ENCODE measurements at regions of chr12 and their contacts with region 1.

Region 1: DNA sequence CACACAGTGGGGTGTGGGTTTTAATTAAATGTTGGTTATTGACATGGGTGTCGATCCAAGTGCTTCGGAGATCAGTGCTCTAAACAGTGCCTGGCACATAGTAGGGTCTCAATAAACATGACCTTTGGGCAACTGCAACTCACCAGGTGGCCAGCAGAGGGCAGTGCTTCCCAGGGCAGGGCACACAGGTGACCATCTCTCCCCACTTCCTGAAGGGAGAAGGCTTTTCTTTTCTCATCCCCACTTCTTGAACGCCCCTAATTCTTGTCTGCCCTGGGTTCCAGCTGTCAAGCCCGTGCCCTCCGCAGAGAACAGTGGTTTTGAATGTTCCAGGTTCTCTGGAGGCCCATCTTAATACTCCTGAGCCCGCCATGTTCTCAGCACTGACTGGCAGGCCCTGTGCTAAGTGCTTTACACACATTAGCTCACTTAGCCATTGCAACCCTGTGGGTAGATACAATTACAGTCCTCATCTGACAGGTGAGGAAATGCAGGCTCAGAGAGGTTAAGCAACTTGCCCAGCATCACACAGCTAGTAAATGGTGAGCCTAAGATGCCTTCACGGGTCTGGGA is 16.3 kb downstream of the RAPGEF3 start:
- DNase-seq: peak; percentile 64
- H3K4me3 Mint-ChIP-seq: no peak overlapping the region
- H3K27ac Mint-ChIP-seq: no peak overlapping the region
- H3K4me1 Mint-ChIP-seq: peaks cover 9% of the 10 kb centered on the region
- H3K27me3 Mint-ChIP-seq: peaks cover 17% of the 10 kb centered on the region
- CTCF ChIP-seq: peak; percentile 99

Region 2: DNA sequence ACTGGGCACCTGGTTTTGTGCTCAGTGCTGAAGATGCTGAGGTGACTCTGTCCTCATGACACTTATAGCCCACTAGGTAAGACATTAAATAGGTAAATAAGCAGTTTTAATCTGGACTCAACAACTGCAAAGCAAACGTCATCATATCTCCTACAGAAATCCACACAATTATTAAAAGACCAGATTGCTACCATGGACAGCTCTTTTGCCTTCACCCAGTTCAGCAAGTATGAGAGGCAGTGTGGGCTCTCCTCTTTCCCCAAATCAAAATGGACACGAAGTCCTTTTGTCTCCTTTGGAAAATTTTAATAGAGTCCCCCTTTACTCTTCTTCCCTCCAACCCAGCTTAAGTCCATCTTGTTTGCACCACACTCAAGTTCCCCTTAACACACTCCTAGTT is 207.6 kb before region 1 on chr12:
- CTCF ChIA-PET with region 1: no interaction called
- POLR2A ChIA-PET with region 1: no interaction called
- intact Hi-C with region 1: no loop called
- DNase-seq: peak; percentile 37
- H3K4me3 Mint-ChIP-seq: no peak overlapping the region
- H3K27ac Mint-ChIP-seq: no peak overlapping the region
- H3K4me1 Mint-ChIP-seq: no peaks in the 10 kb centered on the region
- H3K27me3 Mint-ChIP-seq: peaks cover 85% of the 10 kb centered on the region
- CTCF ChIP-seq: no peak

Region 3: GRCh38 chr12:47715393-47715876 is 26.9 kb before region 1 on chr12:
- CTCF ChIA-PET with region 1: interaction called, 69 read pairs
- POLR2A ChIA-PET with region 1: no interaction called
- intact Hi-C with region 1: loop called (anchors 1 kb)
- DNase-seq: peak; percentile 97
- H3K4me3 Mint-ChIP-seq: peak overlapping the region; percentile 63
- H3K27ac Mint-ChIP-seq: no peak overlapping the region
- H3K4me1 Mint-ChIP-seq: peaks cover 15% of the 10 kb centered on the region
- H3K27me3 Mint-ChIP-seq: no peaks in the 10 kb centered on the region
- CTCF ChIP-seq: peak; percentile 85

Region 4: GRCh38 chr12:47767216-47767724 is 24.9 kb after region 1 on chr12:
- CTCF ChIA-PET with region 1: interaction called, 843 read pairs
- POLR2A ChIA-PET with region 1: interaction called, 38 read pairs
- intact Hi-C with region 1: loop called (anchors 1 kb)
- DNase-seq: peak; percentile 82
- H3K4me3 Mint-ChIP-seq: no peak overlapping the region
- H3K27ac Mint-ChIP-seq: peak overlapping the region; percentile 57
- H3K4me1 Mint-ChIP-seq: peaks cover 23% of the 10 kb centered on the region
- H3K27me3 Mint-ChIP-seq: no peaks in the 10 kb centered on the region
- CTCF ChIP-seq: peak; percentile 47

Region 5: DNA sequence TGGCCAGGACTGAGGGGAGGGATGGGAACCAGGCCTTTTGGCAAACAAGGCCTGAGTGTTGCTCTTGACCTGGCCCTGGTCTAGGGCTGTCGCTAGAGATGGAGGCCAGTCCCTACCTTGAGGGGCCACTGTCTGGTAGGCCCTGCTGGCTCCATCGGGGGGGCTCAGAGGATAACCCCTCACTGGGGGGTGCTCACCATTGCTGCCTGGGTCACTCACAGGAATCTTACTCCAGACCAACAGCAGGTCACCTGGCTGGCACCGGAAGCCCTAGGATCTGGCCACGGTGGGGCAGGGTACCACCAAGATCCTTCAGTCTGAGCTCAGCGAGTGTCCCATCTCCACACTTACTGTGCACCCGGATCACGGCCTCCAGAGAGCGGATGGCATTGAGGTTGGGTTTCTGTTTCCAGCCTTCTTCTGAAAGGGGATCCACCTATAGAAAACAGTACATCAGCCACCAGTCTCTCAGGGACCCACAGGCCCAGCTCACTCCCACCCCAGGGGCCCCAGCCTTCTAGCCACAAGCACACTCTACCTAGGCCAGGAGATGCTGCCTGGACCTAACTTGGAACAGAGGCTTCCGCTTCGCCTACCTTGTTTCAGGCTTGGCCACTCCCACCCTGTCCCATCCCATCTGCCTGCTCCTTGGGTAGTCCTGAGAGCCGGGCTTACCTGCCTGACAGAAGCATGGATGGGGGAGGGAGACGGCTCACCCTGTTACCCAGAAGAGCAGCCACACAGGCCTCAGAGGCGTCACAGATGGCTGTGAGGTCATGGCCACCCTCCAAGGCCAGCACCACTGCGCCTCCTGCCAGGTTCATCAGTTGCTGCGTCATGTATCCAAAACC is 42.9 kb after region 1 on chr12:
- CTCF ChIA-PET with region 1: interaction called, 843 read pairs
- POLR2A ChIA-PET with region 1: interaction called, 15 read pairs
- intact Hi-C with region 1: no loop called
- DNase-seq: no peak
- H3K4me3 Mint-ChIP-seq: no peak overlapping the region
- H3K27ac Mint-ChIP-seq: no peak overlapping the region
- H3K4me1 Mint-ChIP-seq: peaks cover 12% of the 10 kb centered on the region
- H3K27me3 Mint-ChIP-seq: no peaks in the 10 kb centered on the region
- CTCF ChIP-seq: no peak

Region 6: DNA sequence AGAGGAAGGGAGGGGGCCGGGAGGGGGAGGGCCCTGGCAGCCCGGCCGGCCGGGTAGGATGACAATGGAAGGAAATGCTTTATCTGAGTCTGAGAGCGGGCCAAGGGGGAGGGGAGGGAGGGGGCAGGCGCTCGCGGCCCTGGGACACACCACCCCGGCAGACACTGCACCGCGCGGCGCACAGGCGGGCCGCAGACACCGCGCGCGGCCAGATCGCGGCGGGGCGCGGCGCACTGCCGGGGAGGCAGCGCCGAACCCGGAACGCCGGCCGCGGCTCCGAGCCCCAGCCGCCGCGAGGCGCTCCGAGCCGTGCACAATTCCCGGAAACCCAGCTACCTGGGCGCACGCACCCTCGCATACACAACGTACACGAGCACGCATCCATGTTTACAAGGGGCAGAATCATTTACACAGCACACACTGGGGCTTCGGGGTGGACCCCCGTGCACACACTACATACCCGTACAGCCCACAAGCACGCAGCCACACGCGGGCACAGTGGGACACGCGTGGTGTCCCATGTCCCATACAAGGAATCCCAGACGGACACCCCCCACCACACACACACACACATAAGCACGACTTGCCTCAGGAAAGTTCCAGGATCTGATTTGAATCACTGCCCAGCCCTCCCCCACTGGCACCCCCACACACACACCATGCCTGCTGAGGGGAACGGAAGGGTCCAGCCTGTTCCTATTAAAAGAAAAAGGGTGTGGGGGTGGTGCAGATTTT is 77.7 kb after region 1 on chr12 and contains the start of gene HDAC7:
- CTCF ChIA-PET with region 1: interaction called, 33 read pairs
- POLR2A ChIA-PET with region 1: interaction called, 4 read pairs
- intact Hi-C with region 1: no loop called
- DNase-seq: peak; percentile 81
- H3K4me3 Mint-ChIP-seq: peak within 1 kb of the TSS; percentile 98
- H3K27ac Mint-ChIP-seq: peak within 1 kb of the TSS; percentile 93
- H3K4me1 Mint-ChIP-seq: peaks cover 73% of the 10 kb centered on the region
- H3K27me3 Mint-ChIP-seq: no peaks in the 10 kb centered on the region
- CTCF ChIP-seq: no peak
- total RNA-seq, gene HDAC7: 65.0 and 80.1 TPM in 2 replicates

Region 7: DNA sequence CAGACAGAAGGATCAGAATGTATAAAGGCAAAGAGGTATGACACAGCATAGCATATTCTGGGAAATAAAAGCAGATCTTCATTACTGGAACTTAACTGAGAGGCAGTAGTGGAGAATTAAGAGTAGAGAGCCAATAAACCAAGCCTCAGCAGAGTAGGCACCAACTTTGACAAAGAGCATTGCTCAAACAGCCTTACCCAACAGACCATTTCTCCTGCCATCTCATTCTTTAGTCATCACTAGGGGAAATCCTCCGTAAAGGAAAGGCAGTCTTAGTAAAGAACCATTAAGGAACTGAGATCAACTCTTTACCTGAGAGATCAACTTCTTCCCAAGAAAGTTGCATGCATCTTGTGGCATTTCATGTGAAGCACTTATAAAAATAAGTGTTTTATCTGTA is 326.9 kb after region 1 on chr12:
- CTCF ChIA-PET with region 1: no interaction called
- POLR2A ChIA-PET with region 1: no interaction called
- intact Hi-C with region 1: no loop called
- DNase-seq: peak; percentile 45
- H3K4me3 Mint-ChIP-seq: no peak overlapping the region
- H3K27ac Mint-ChIP-seq: no peak overlapping the region
- H3K4me1 Mint-ChIP-seq: peaks cover 4% of the 10 kb centered on the region
- H3K27me3 Mint-ChIP-seq: no peaks in the 10 kb centered on the region
- CTCF ChIP-seq: no peak